ENCODE measurements at regions of chr4 and their contacts with region 1.

Region 1: GRCh38 chr4:113394730-113395530 is 345.5 kb downstream of the ANK2 start:
- DNase-seq: peak; percentile 57 to 80
- H3K4me3 ChIP-seq: no peak overlapping the region
- H3K4me3 Mint-ChIP-seq: no peak overlapping the region
- H3K27ac Mint-ChIP-seq: no peak overlapping the region
- H3K4me1 ChIP-seq: peaks cover 19% of the 10 kb centered on the region
- H3K4me1 Mint-ChIP-seq: peaks cover 7% of the 10 kb centered on the region
- H3K27me3 ChIP-seq: no peaks in the 10 kb centered on the region
- H3K27me3 Mint-ChIP-seq: no peaks in the 10 kb centered on the region
- CTCF ChIP-seq: peak; percentile 52 to 84

Region 2: DNA sequence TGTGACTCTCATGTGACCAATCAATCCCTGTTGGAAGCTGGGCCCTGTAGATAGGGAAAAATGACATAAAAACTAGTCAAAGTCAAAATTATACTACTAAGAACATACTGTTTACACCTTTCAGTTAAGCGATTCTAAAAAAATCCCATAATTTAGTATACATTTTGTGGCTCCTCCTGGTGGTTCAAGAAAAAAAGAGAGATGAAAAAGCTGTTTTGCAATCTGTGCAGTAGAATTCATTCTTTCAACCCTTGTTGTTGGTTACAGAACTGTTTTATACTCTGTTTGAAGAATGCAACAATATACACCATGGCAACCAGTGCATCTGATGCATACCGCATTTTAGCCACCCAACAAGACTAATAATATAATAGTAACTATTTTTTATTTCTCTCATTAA is 412.2 kb before region 1 on chr4:
- CTCF ChIA-PET with region 1: no interaction called
- POLR2A ChIA-PET with region 1: no interaction called
- intact Hi-C with region 1: no loop called
- DNase-seq: no peak
- H3K4me3 ChIP-seq: no peak overlapping the region
- H3K4me3 Mint-ChIP-seq: no peak overlapping the region
- H3K27ac Mint-ChIP-seq: no peak overlapping the region
- H3K4me1 ChIP-seq: no peaks in the 10 kb centered on the region
- H3K4me1 Mint-ChIP-seq: no peaks in the 10 kb centered on the region
- H3K27me3 ChIP-seq: no peaks in the 10 kb centered on the region
- H3K27me3 Mint-ChIP-seq: peaks cover 3% of the 10 kb centered on the region
- CTCF ChIP-seq: no peak

Region 3: DNA sequence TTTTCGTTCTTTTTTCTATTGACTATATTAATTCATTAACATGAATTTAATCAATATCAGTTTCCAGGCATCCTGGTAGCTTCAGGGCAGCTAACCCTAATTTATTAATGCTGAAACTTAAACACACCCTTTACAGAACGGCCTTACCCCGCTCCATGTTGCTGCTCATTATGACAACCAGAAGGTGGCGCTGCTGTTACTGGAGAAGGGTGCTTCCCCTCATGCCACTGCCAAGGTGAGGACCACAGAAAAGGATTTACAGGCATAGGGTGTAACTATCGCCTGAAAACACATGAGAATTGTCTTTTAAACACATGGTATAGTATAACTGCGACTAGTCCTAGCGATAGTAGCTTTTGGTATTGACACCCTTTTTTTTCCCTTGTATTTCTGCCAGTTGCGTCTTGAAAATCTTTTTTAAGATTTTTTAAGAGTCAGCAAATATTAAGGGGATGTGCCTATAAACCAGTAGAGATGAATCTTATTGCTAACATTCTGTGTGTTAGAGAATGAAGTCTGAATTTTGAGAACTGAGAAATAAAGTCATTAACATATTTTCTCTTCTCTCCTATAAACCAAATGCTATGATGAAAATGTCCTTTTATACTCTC is 116.5 kb before region 1 on chr4:
- CTCF ChIA-PET with region 1: no interaction called
- POLR2A ChIA-PET with region 1: no interaction called
- intact Hi-C with region 1: loop called (anchors 1 kb)
- DNase-seq: peak; percentile 67 to 73
- H3K4me3 ChIP-seq: no peak overlapping the region
- H3K4me3 Mint-ChIP-seq: no peak overlapping the region
- H3K27ac Mint-ChIP-seq: no peak overlapping the region
- H3K4me1 ChIP-seq: no peaks in the 10 kb centered on the region
- H3K4me1 Mint-ChIP-seq: no peaks in the 10 kb centered on the region
- H3K27me3 ChIP-seq: no peaks in the 10 kb centered on the region
- H3K27me3 Mint-ChIP-seq: no peaks in the 10 kb centered on the region
- CTCF ChIP-seq: peak; percentile 77 to 78

Region 4: GRCh38 chr4:113289766-113290165 is 105.2 kb before region 1 on chr4:
- CTCF ChIA-PET with region 1: no interaction called
- POLR2A ChIA-PET with region 1: no interaction called
- intact Hi-C with region 1: no loop called
- DNase-seq: no peak
- H3K4me3 ChIP-seq: no peak overlapping the region
- H3K4me3 Mint-ChIP-seq: no peak overlapping the region
- H3K27ac Mint-ChIP-seq: no peak overlapping the region
- H3K4me1 ChIP-seq: no peaks in the 10 kb centered on the region
- H3K4me1 Mint-ChIP-seq: no peaks in the 10 kb centered on the region
- H3K27me3 ChIP-seq: no peaks in the 10 kb centered on the region
- H3K27me3 Mint-ChIP-seq: no peaks in the 10 kb centered on the region
- CTCF ChIP-seq: no peak

Region 5: GRCh38 chr4:113303315-113303714 is 91.6 kb before region 1 on chr4:
- CTCF ChIA-PET with region 1: no interaction called
- POLR2A ChIA-PET with region 1: no interaction called
- intact Hi-C with region 1: no loop called
- DNase-seq: no peak
- H3K4me3 ChIP-seq: no peak overlapping the region
- H3K4me3 Mint-ChIP-seq: no peak overlapping the region
- H3K27ac Mint-ChIP-seq: no peak overlapping the region
- H3K4me1 ChIP-seq: no peaks in the 10 kb centered on the region
- H3K4me1 Mint-ChIP-seq: no peaks in the 10 kb centered on the region
- H3K27me3 ChIP-seq: no peaks in the 10 kb centered on the region
- H3K27me3 Mint-ChIP-seq: no peaks in the 10 kb centered on the region
- CTCF ChIP-seq: no peak

Region 6: GRCh38 chr4:113434247-113434587 is 39.3 kb after region 1 on chr4:
- CTCF ChIA-PET with region 1: no interaction called
- POLR2A ChIA-PET with region 1: no interaction called
- intact Hi-C with region 1: loop called (anchors 5 kb)
- DNase-seq: peak in 1 of 2 experiments; percentile 17
- H3K4me3 ChIP-seq: no peak overlapping the region
- H3K4me3 Mint-ChIP-seq: no peak overlapping the region
- H3K27ac Mint-ChIP-seq: peak overlapping the region; percentile 42
- H3K4me1 ChIP-seq: peaks cover 9% of the 10 kb centered on the region; the same call in 1 of the 2 replicates
- H3K4me1 Mint-ChIP-seq: peaks cover 12% of the 10 kb centered on the region
- H3K27me3 ChIP-seq: no peaks in the 10 kb centered on the region
- H3K27me3 Mint-ChIP-seq: no peaks in the 10 kb centered on the region
- CTCF ChIP-seq: no peak

Region 7: GRCh38 chr4:113684534-113685091 is 289.7 kb after region 1 on chr4:
- CTCF ChIA-PET with region 1: interaction called, 4 read pairs
- POLR2A ChIA-PET with region 1: no interaction called
- intact Hi-C with region 1: loop called (anchors 5 kb)
- DNase-seq: peak; percentile 76 to 89
- H3K4me3 ChIP-seq: no peak overlapping the region
- H3K4me3 Mint-ChIP-seq: no peak overlapping the region
- H3K27ac Mint-ChIP-seq: no peak overlapping the region
- H3K4me1 ChIP-seq: peaks cover 52% of the 10 kb centered on the region
- H3K4me1 Mint-ChIP-seq: peaks cover 47% of the 10 kb centered on the region
- H3K27me3 ChIP-seq: no peaks in the 10 kb centered on the region
- H3K27me3 Mint-ChIP-seq: no peaks in the 10 kb centered on the region
- CTCF ChIP-seq: peak; percentile 31 to 46

Region 8: GRCh38 chr4:113893546-113893945 is 498.6 kb after region 1 on chr4:
- CTCF ChIA-PET with region 1: no interaction called
- POLR2A ChIA-PET with region 1: no interaction called
- intact Hi-C with region 1: loop called (anchors 5 kb)
- DNase-seq: no peak
- H3K4me3 ChIP-seq: no peak overlapping the region
- H3K4me3 Mint-ChIP-seq: no peak overlapping the region
- H3K27ac Mint-ChIP-seq: no peak overlapping the region
- H3K4me1 ChIP-seq: no peaks in the 10 kb centered on the region
- H3K4me1 Mint-ChIP-seq: no peaks in the 10 kb centered on the region
- H3K27me3 ChIP-seq: no peaks in the 10 kb centered on the region
- H3K27me3 Mint-ChIP-seq: no peaks in the 10 kb centered on the region
- CTCF ChIP-seq: peak; percentile 21 to 28

Region 9: GRCh38 chr4:114378306-114378903 is 983.5 kb after region 1 on chr4:
- CTCF ChIA-PET with region 1: no interaction called
- POLR2A ChIA-PET with region 1: no interaction called
- intact Hi-C with region 1: loop called (anchors 2 kb)
- DNase-seq: peak in 1 of 2 experiments; percentile 27
- H3K4me3 ChIP-seq: no peak overlapping the region
- H3K4me3 Mint-ChIP-seq: no peak overlapping the region
- H3K27ac Mint-ChIP-seq: no peak overlapping the region
- H3K4me1 ChIP-seq: no peaks in the 10 kb centered on the region
- H3K4me1 Mint-ChIP-seq: no peaks in the 10 kb centered on the region
- H3K27me3 ChIP-seq: no peaks in the 10 kb centered on the region
- H3K27me3 Mint-ChIP-seq: no peaks in the 10 kb centered on the region
- CTCF ChIP-seq: peak in 1 of 2 experiments; percentile 48